RWPE1 (cell line): ENCODE measurements at regions of chr16 and their contacts with region 1.

Region 1: DNA sequence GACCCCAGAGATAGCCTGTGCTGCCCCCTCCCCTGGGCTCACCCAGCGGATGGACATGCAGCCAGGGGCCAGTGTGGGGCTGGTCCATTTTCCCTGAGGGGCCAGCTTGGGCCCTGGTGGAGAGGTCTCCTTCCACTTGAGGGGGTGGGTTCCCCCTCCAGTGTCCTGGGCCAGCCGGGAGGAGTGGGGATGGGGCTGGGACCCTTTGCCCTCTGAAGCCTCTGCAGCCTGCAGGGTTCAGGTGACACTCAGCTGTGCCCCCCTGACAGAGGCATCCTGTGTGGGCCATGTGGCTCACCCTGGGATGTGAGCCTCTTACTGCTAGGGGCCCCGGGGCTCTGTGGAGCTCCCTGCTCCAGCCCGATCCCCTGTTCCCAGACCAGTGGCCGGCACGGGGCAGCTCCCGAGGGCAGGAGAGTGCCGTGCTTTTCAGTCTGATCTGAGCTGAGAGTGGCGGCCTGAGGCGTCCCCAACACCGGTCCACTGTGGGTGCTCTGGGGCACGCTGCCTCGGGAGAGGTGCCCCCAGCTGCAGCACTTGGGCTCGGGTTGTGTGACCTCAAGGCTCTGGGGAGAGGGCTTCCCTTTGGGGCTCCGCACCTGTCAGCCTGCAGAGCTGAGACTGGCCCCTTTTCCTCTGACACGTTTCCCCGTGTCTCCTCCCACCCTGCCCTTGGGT is 439 bp upstream of the GNG13 start:
- DNase-seq: no peak
- H3K27ac ChIP-seq: no peak overlapping the region
- CTCF ChIP-seq: no peak

Region 2: GRCh38 chr16:768428-768827 is 32.5 kb before region 1 on chr16:
- CTCF ChIA-PET with region 1: no interaction called
- POLR2A ChIA-PET with region 1: no interaction called
- DNase-seq: no peak
- H3K27ac ChIP-seq: no peak overlapping the region; the same call in 1 of the 2 replicates
- CTCF ChIP-seq: no peak

Region 3: GRCh38 chr16:1809281-1809801 is 1008.4 kb after region 1 on chr16:
- CTCF ChIA-PET with region 1: no interaction called
- POLR2A ChIA-PET with region 1: interaction called, 12 read pairs
- DNase-seq: no peak
- H3K27ac ChIP-seq: no peak overlapping the region
- CTCF ChIP-seq: no peak